A673 (cell line): ENCODE measurements at regions of chr11 and their contacts with region 1.

Region 1: GRCh38 chr11:123511037-123511870 is 81.2 kb downstream of the GRAMD1B start:
- DNase-seq: peak; percentile 98
- H3K4me3 ChIP-seq: no peak overlapping the region
- H3K27ac ChIP-seq: peak overlapping the region; percentile 3
- H3K4me1 ChIP-seq: peaks cover 12% of the 10 kb centered on the region
- H3K27me3 ChIP-seq: no peaks in the 10 kb centered on the region
- CTCF ChIP-seq: peak; percentile 99

Region 2: GRCh38 chr11:123183391-123184099 is 327.7 kb before region 1 on chr11:
- CTCF ChIA-PET with region 1: no interaction called
- POLR2A ChIA-PET with region 1: no interaction called
- intact Hi-C with region 1: no loop called
- DNase-seq: no peak
- H3K4me3 ChIP-seq: no peak overlapping the region
- H3K27ac ChIP-seq: no peak overlapping the region
- H3K4me1 ChIP-seq: peaks cover 36% of the 10 kb centered on the region
- H3K27me3 ChIP-seq: no peaks in the 10 kb centered on the region
- CTCF ChIP-seq: no peak

Region 3: GRCh38 chr11:123494195-123495050 is 16.8 kb before region 1 on chr11:
- CTCF ChIA-PET with region 1: no interaction called
- POLR2A ChIA-PET with region 1: no interaction called
- intact Hi-C with region 1: no loop called
- DNase-seq: peak; percentile 58
- H3K4me3 ChIP-seq: no peak overlapping the region
- H3K27ac ChIP-seq: no peak overlapping the region
- H3K4me1 ChIP-seq: no peaks in the 10 kb centered on the region
- H3K27me3 ChIP-seq: no peaks in the 10 kb centered on the region
- CTCF ChIP-seq: no peak

Region 4: DNA sequence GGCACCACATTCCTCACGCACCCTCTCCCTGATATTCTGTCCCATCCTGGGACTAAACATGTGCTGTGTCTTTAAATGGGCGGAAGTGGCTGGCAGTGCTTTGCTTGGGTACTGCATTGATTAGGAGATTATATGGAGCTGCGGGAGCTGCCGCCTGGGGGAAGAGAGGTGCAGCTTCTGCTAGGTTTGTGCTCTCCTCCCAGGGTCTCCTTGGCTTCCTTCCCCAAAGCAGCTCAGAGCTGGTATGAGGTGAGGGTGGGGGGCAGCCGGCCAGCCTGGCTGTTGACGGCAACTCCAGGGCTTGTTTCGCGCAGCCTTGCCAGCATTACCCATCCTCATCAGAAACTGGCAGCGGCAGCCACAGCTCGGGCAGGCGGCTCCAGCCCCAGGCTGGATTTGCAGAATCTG is 14.3 kb after region 1 on chr11:
- CTCF ChIA-PET with region 1: no interaction called
- POLR2A ChIA-PET with region 1: no interaction called
- intact Hi-C with region 1: no loop called
- DNase-seq: peak; percentile 65
- H3K4me3 ChIP-seq: peak overlapping the region; percentile 31
- H3K27ac ChIP-seq: no peak overlapping the region
- H3K4me1 ChIP-seq: peaks cover 16% of the 10 kb centered on the region
- H3K27me3 ChIP-seq: no peaks in the 10 kb centered on the region
- CTCF ChIP-seq: no peak

Region 5: DNA sequence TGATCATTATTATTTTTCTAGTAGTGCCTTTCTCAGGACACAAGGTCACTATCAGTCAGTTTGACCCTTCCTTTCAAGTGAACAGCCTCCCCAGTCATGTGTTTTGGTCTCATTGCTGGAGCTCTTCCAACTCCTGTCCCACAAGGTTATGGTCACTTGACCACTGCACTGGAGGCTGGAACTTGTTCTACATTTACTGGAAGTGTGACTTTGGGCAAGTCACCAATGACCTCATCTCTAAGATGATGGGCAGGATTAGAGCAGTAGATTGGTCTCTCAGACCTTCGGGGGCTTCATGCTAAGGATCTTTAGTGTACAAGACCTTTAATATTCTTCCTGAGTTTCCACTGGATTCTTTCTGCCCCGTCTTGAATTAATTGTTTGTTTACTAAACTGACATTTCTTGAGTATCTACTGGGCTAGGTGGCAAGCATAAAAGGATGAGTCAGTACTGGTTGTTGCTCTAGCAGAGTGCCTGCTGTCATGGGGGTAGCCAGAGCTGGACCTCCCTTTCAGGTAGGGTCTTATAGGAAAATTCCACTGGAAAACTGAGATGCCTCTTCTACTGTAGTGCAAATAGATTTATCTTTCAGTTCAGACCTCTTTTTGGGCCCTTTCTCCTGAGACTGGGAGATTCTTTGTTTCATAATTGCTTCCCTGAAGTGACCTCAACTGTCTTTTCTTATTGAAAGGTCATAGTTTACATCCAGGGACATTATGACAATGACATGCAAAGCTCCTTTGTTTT is 25.6 kb after region 1 on chr11:
- CTCF ChIA-PET with region 1: no interaction called
- POLR2A ChIA-PET with region 1: no interaction called
- intact Hi-C with region 1: no loop called
- DNase-seq: no peak
- H3K4me3 ChIP-seq: no peak overlapping the region
- H3K27ac ChIP-seq: no peak overlapping the region
- H3K4me1 ChIP-seq: no peaks in the 10 kb centered on the region
- H3K27me3 ChIP-seq: no peaks in the 10 kb centered on the region
- CTCF ChIP-seq: no peak

Region 6: GRCh38 chr11:123560006-123560405 is 48.8 kb after region 1 on chr11:
- CTCF ChIA-PET with region 1: interaction called, 8 read pairs
- POLR2A ChIA-PET with region 1: no interaction called
- intact Hi-C with region 1: loop called (anchors 2 kb)
- DNase-seq: peak; percentile 80
- H3K4me3 ChIP-seq: peak overlapping the region; percentile 39
- H3K27ac ChIP-seq: no peak overlapping the region
- H3K4me1 ChIP-seq: peaks cover 19% of the 10 kb centered on the region
- H3K27me3 ChIP-seq: no peaks in the 10 kb centered on the region
- CTCF ChIP-seq: no peak

Region 7: DNA sequence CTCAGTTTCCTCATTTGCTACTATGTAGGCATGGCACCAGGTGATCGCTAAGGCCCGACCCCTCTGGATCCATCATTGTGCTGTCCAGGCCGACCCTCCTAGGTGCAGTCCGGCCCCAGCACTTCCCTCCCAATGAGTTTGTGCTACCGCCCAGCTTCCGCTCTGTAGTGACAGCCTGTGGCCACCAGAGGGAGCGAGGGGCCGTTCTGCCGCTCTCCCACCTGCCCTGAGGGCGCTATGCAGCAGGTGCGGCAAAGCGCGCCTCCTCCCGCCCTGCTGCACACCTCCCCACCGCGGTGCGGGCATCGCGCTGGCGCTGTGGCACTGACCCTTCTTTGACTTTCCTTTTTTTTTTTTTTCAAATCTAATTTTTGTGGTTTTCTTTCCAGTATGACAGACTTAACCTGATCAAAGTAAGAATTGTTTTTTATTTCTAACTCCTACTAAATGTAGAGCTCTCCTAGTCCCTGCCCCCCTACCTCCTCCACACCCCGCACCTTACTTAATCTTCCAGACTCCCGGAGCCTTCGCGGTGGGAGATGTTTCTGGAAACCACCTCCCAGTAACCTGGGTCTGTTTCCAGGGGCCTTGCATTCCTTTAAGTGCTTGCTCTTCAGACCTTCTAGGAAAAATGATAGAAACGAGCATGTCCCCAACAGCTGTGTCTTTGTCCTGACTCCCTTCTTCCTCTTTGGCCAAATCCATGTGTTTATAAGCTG is 69.5 kb after region 1 on chr11:
- CTCF ChIA-PET with region 1: no interaction called
- POLR2A ChIA-PET with region 1: no interaction called
- intact Hi-C with region 1: loop called (anchors 1 kb)
- DNase-seq: peak; percentile 65
- H3K4me3 ChIP-seq: no peak overlapping the region
- H3K27ac ChIP-seq: no peak overlapping the region
- H3K4me1 ChIP-seq: peaks cover 4% of the 10 kb centered on the region
- H3K27me3 ChIP-seq: no peaks in the 10 kb centered on the region
- CTCF ChIP-seq: peak; percentile 99

Region 8: GRCh38 chr11:123597859-123598258 is 86.6 kb after region 1 on chr11:
- CTCF ChIA-PET with region 1: interaction called, 13 read pairs
- POLR2A ChIA-PET with region 1: no interaction called
- intact Hi-C with region 1: no loop called
- DNase-seq: no peak
- H3K4me3 ChIP-seq: no peak overlapping the region
- H3K27ac ChIP-seq: no peak overlapping the region
- H3K4me1 ChIP-seq: no peaks in the 10 kb centered on the region
- H3K27me3 ChIP-seq: no peaks in the 10 kb centered on the region
- CTCF ChIP-seq: 0 out of 2 replicates have a peak, but pooled peaks have one; percentile 29

Region 9: GRCh38 chr11:123707606-123708205 is 196.5 kb after region 1 on chr11:
- CTCF ChIA-PET with region 1: no interaction called
- POLR2A ChIA-PET with region 1: no interaction called
- intact Hi-C with region 1: loop called (anchors 10 kb)
- DNase-seq: peak; percentile 87
- H3K4me3 ChIP-seq: no peak overlapping the region
- H3K27ac ChIP-seq: no peak overlapping the region
- H3K4me1 ChIP-seq: no peaks in the 10 kb centered on the region
- H3K27me3 ChIP-seq: no peaks in the 10 kb centered on the region
- CTCF ChIP-seq: peak; percentile 96